H1 (cell line): ENCODE measurements at regions of chr19 and their contacts with region 1.

Region 1: GRCh38 chr19:13846557-13847406 is 30.2 kb upstream of the NANOS3 start:
- DNase-seq: peak in 1 of 2 experiments; percentile 98
- H3K4me3 ChIP-seq: peak overlapping the region; percentile 52 to 78 (median 64); a peak in 7 of 8 replicates
- H3K27ac ChIP-seq: peak overlapping the region; percentile 97
- H3K4me1 ChIP-seq: peaks cover 6 to 38% (median 30%) of the 10 kb centered on the region in 4 experiments
- H3K27me3 ChIP-seq: no peaks in the 10 kb centered on the region
- CTCF ChIP-seq: no peak
- EP300 ChIP-seq: peak in 1 of 2 experiments; percentile 89; a peak in 1 of 3 replicates
- POLR2A ChIP-seq: peak in 1 of 2 experiments; percentile 84; a peak in 2 of 3 replicates
- RAD21 ChIP-seq: no peak

Region 2: GRCh38 chr19:13764101-13764807 is 82.5 kb before region 1 on chr19 and contains the start of gene MRI1:
- CTCF ChIA-PET with region 1: no interaction called
- POLR2A ChIA-PET with region 1: no interaction called
- DNase-seq: peak in 1 of 2 experiments; percentile 72
- H3K4me3 ChIP-seq: peak within 1 kb of the TSS; percentile 47 to 88 (median 52)
- H3K27ac ChIP-seq: no peak within 1 kb of the TSS
- H3K4me1 ChIP-seq: peaks cover 0 to 9% (median 2%) of the 10 kb centered on the region in 4 experiments; a peak in 3 of 7 replicates
- H3K27me3 ChIP-seq: no peaks in the 10 kb centered on the region; a peak in 1 of 7 replicates
- CTCF ChIP-seq: no peak
- EP300 ChIP-seq: no peak
- POLR2A ChIP-seq: no peak
- RAD21 ChIP-seq: no peak
- total RNA-seq, gene MRI1: 21.7 and 24.5 TPM in 2 replicates

Region 3: GRCh38 chr19:13817615-13818371 is 29.0 kb before region 1 on chr19:
- CTCF ChIA-PET with region 1: interaction called, 8 read pairs
- POLR2A ChIA-PET with region 1: interaction called, 28 read pairs
- DNase-seq: peak; percentile 93 to 98
- H3K4me3 ChIP-seq: peak overlapping the region; percentile 49 to 75 (median 58)
- H3K27ac ChIP-seq: peak overlapping the region; percentile 93
- H3K4me1 ChIP-seq: peaks cover 0 to 5% (median 4%) of the 10 kb centered on the region in 4 experiments; a peak in 5 of 7 replicates
- H3K27me3 ChIP-seq: no peaks in the 10 kb centered on the region
- CTCF ChIP-seq: no peak
- EP300 ChIP-seq: peak in 1 of 2 experiments; percentile 64; a peak in 1 of 3 replicates
- POLR2A ChIP-seq: peak; percentile 69 to 75
- RAD21 ChIP-seq: peak in 1 of 2 experiments; percentile 4; a peak in 1 of 4 replicates

Region 4: DNA sequence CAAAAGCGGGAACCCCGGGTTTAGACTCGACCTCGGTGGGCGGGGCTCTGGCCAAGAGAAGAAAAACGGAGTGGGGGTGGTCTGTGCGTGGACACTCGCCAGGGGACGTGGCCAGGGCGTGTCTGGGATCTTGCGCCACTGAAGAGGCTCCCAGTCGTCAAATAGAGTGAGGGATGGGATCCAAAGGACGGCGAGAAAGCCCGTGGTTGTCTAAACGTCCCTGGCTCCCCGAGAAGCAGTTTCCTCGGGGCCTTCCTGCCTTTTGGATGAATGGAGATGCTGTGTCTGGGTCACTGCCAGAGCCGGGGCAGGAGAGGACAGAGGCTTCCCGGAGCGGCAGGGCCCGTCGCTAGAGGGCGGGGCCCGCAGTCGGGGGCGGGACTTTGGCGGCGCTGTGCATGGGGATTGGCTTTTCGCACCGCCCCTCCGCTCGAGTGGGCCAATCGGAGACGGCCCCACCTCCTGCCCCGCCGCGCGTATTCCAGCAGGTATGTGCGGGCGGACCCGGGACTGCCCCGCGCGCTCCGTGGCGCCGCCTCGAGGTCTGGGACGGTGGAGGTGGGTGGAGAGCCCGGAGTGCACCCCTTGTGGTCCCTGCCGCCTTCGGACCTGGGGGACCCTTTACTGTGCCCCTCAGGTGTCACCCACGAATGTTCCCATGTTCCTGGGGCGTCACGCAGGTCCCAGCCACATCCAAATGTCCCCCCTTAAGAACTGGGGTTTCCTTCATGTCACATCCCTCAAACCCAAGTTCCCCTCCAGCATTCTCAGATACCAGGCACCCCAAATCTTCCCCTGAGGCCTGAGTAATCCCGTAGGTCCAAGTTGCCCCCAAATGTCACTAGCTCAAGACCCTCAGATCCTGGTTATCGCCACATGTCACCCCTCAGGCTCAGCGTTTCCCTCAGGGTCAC is 13.2 kb before region 1 on chr19:
- CTCF ChIA-PET with region 1: interaction called, 11 read pairs
- POLR2A ChIA-PET with region 1: interaction called, 28 read pairs
- DNase-seq: peak in 1 of 2 experiments; percentile 99
- H3K4me3 ChIP-seq: peak overlapping the region; percentile 39 to 63 (median 48); a peak in 7 of 8 replicates
- H3K27ac ChIP-seq: 0 out of 2 replicates have a peak overlapping the region, but pooled peaks have one; percentile 3
- H3K4me1 ChIP-seq: peaks cover 0 to 5% (median 1%) of the 10 kb centered on the region in 4 experiments; a peak in 3 of 7 replicates
- H3K27me3 ChIP-seq: no peaks in the 10 kb centered on the region
- CTCF ChIP-seq: peak; percentile 74 to 97 (median 75)
- EP300 ChIP-seq: no peak
- POLR2A ChIP-seq: peak in 1 of 2 experiments; percentile 70; a peak in 2 of 3 replicates
- RAD21 ChIP-seq: peak; percentile 46 to 66; a peak in 3 of 4 replicates

Region 5: GRCh38 chr19:13888240-13888639 is 41.5 kb after region 1 on chr19:
- CTCF ChIA-PET with region 1: no interaction called
- POLR2A ChIA-PET with region 1: no interaction called
- DNase-seq: no peak
- H3K4me3 ChIP-seq: no peak overlapping the region
- H3K27ac ChIP-seq: no peak overlapping the region
- H3K4me1 ChIP-seq: 0 out of 7 replicates have a peak, but pooled peaks cover 0 to 3% (median 0%) of the 10 kb centered on the region in 4 experiments
- H3K27me3 ChIP-seq: no peaks in the 10 kb centered on the region
- CTCF ChIP-seq: no peak
- EP300 ChIP-seq: no peak
- POLR2A ChIP-seq: no peak
- RAD21 ChIP-seq: no peak